Lower leg skin (tissue), 4 donors: ENCODE measurements at regions of chr7 and their contacts with region 1.

Region 1: GRCh38 chr7:82549616-82550285 is 106.2 kb upstream of the CACNA2D1 start:
- DNase-seq: no peak
- H3K4me3 ChIP-seq: no peak overlapping the region
- CTCF ChIP-seq: no peak
- POLR2A ChIP-seq: no peak

Region 2: DNA sequence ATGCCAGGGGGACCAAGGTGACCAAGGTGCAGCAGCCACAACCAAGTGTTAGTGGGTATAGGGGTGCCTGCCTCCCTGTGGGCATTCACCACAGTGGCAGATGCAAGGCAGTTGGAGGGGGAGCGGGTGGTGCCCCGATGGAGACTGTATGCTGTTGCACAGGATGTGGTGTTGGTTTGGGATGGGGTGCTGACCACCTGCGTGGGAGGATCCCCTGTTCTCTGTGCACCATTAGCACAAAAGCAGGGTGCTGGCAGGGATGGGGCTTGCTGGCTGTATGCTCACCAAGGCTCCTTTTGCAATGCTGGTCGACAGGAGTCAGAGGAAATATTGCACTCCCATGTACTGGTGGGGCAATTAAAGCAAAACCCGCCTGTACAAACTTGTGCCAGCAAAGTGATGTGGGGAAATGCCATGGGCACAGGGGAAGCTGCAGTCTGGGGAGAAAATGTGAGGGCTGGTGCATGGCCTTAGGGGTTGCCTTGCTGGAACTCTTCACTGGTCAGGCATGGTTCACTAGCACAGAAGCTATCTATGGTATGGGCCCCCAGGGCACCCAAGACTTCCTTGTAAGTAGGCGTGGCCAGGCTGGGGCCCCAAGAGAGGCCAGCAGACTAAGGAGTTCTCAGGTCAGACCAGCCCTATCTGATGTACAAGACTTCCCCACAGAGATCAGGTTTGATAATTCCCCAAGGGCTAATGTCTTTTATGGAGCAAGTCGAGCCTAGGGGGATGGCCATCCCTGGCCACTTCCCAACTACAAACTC is 1986.0 kb before region 1 on chr7:
- intact Hi-C with region 1: no loop called
- DNase-seq: no peak
- H3K4me3 ChIP-seq: no peak overlapping the region
- CTCF ChIP-seq: no peak
- POLR2A ChIP-seq: no peak

Region 3: GRCh38 chr7:80584778-80585177 is 1965.0 kb before region 1 on chr7:
- intact Hi-C with region 1: loop called (anchors 5 kb)
- DNase-seq: no peak
- H3K4me3 ChIP-seq: no peak overlapping the region
- CTCF ChIP-seq: no peak
- POLR2A ChIP-seq: no peak